ENCODE measurements at regions of chr7 and their contacts with region 1.

Region 1: GRCh38 chr7:37181550-37181932 is 267.1 kb downstream of the ELMO1 start:
- DNase-seq: no peak
- H3K4me3 Mint-ChIP-seq: no peak overlapping the region
- H3K27ac Mint-ChIP-seq: no peak overlapping the region
- H3K4me1 Mint-ChIP-seq: peaks cover 16% of the 10 kb centered on the region
- H3K27me3 Mint-ChIP-seq: no peaks in the 10 kb centered on the region

Region 2: DNA sequence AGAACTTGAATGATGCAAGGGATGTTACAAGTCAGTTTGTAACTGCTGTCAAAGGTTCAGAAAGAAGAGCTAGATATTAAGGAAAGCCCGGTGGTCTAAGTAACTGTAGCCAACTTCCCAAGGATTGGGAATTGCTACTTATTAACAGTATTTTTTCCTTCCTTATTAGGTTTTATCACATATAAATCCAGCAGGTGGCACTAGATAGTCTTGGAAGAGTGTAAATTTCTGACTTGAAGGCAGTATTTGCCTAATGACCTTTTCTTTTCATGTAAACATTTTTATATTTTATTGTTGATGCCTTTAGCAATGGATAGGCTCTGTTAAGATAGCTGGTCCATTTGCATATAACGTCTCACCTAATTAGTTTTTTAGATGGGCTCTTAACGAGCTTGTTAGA is 740.7 kb before region 1 on chr7:
- CTCF ChIA-PET with region 1: interaction called, 18 read pairs
- POLR2A ChIA-PET with region 1: interaction called, 3 read pairs
- DNase-seq: no peak
- H3K4me3 Mint-ChIP-seq: no peak overlapping the region
- H3K27ac Mint-ChIP-seq: no peak overlapping the region
- H3K4me1 Mint-ChIP-seq: no peaks in the 10 kb centered on the region
- H3K27me3 Mint-ChIP-seq: no peaks in the 10 kb centered on the region

Region 3: GRCh38 chr7:36487756-36488336 is 693.7 kb before region 1 on chr7:
- CTCF ChIA-PET with region 1: interaction called, 78 read pairs
- POLR2A ChIA-PET with region 1: interaction called, 5 read pairs
- DNase-seq: peak; percentile 41
- H3K4me3 Mint-ChIP-seq: no peak overlapping the region
- H3K27ac Mint-ChIP-seq: no peak overlapping the region
- H3K4me1 Mint-ChIP-seq: peaks cover 1% of the 10 kb centered on the region
- H3K27me3 Mint-ChIP-seq: peaks cover 2% of the 10 kb centered on the region

Region 4: GRCh38 chr7:36677769-36678437 is 503.6 kb before region 1 on chr7:
- CTCF ChIA-PET with region 1: interaction called, 24 read pairs
- POLR2A ChIA-PET with region 1: interaction called, 3 read pairs
- DNase-seq: no peak
- H3K4me3 Mint-ChIP-seq: no peak overlapping the region
- H3K27ac Mint-ChIP-seq: peak overlapping the region; percentile 74
- H3K4me1 Mint-ChIP-seq: peaks cover 39% of the 10 kb centered on the region
- H3K27me3 Mint-ChIP-seq: no peaks in the 10 kb centered on the region

Region 5: GRCh38 chr7:37107047-37107750 is 74.3 kb before region 1 on chr7:
- CTCF ChIA-PET with region 1: no interaction called
- POLR2A ChIA-PET with region 1: no interaction called
- DNase-seq: no peak
- H3K4me3 Mint-ChIP-seq: no peak overlapping the region
- H3K27ac Mint-ChIP-seq: no peak overlapping the region
- H3K4me1 Mint-ChIP-seq: peaks cover 16% of the 10 kb centered on the region
- H3K27me3 Mint-ChIP-seq: no peaks in the 10 kb centered on the region

Region 6: DNA sequence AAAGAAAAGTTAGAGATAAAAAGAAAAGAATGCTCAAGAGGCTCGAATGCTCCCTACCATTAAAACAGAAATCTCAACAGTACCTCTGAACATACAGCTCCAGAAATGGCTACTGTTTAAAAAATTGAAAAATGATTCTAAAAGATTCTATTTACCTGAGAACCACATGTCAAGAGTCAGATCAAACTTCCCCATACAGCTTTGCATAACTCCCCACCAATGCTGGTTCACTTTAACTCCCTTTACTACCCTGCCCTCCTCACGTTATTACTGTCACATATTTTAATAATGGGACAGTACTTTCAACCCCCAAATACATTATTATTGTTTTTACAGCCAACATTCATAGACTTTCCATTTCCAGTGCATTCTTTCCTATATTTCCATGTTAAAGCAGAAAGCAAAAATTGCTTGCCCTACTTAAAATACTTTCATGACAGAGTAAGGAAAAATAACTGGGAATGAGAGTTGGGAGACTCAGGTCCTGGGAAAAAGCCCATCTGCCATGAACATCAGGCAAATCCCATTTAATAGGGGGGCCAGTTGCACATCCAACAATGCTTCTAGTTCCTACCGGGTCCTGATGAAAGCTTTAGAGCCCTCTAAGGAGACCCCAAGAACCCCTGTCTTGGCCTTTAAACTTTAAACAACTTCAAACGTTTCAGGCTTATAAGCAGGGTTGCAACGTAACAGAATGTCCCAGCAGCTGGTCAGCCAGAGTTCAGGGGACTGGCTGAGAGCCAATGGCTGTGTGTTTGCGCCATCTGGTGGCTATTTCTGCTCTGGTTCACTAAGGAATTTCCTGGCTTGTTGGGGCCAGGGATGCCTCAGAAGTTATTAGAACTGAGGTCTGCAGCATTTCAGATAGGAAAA is 19.7 kb after region 1 on chr7:
- CTCF ChIA-PET with region 1: interaction called, 11 read pairs
- POLR2A ChIA-PET with region 1: no interaction called
- DNase-seq: peak; percentile 54
- H3K4me3 Mint-ChIP-seq: no peak overlapping the region
- H3K27ac Mint-ChIP-seq: no peak overlapping the region
- H3K4me1 Mint-ChIP-seq: peaks cover 9% of the 10 kb centered on the region
- H3K27me3 Mint-ChIP-seq: no peaks in the 10 kb centered on the region

Region 7: DNA sequence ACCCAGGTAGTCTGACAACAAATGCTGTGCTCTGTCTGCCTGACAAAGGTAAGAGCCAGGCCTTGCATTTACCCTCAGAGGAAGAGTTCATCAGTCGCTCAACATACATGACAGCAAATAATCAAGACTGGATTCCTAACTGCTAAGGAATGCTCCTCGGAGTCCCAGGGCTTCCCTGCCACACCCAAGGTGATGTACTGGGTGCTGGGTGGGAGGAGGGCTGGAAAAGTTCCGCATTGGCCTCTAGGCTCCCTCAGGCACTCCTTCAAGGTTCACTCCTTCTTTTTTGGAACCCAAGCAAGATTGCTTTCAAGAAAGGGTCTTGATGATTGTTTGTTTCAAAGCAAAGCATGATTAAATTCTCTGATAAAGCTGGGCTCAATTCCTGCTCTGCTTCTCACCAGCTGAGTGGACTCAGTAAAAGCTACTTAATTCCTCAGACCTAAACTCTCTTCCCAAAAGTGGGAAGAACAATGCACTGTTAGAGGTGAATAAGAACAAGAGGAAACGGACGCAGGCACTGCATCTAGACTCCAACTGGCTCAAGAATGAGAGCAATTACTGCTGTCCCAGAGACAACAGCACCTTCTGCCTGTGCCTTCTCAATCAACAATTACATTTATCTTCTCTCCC is 93.7 kb after region 1 on chr7:
- CTCF ChIA-PET with region 1: no interaction called
- POLR2A ChIA-PET with region 1: no interaction called
- DNase-seq: no peak
- H3K4me3 Mint-ChIP-seq: no peak overlapping the region
- H3K27ac Mint-ChIP-seq: no peak overlapping the region
- H3K4me1 Mint-ChIP-seq: peaks cover 37% of the 10 kb centered on the region
- H3K27me3 Mint-ChIP-seq: no peaks in the 10 kb centered on the region

Measured in activated CD4-positive, alpha-beta memory T cell treated with anti-CD3 and anti-CD28 coated beads, Interleukin-2, amount 10 ng/mL, durations not matched to agents 7 days and 5 days (primary cell).